ENCODE measurements at regions of chr19 and their contacts with region 1.

Region 1: GRCh38 chr19:39704181-39705044 is at the start of gene LGALS14:
- DNase-seq: no peak
- ATAC-seq: peak; percentile 68
- H3K4me3 ChIP-seq: peak within 1 kb of the TSS; percentile 58
- H3K27ac ChIP-seq: peak within 1 kb of the TSS; percentile 88
- H3K4me1 ChIP-seq: peaks cover 91% of the 10 kb centered on the region
- H3K27me3 ChIP-seq: no peaks in the 10 kb centered on the region
- CTCF ChIP-seq: no peak
- EP300 ChIP-seq: 0 out of 4 replicates have a peak, but pooled peaks of 1 of the 2 experiments have one; percentile 33
- POLR2A ChIP-seq: peak; percentile 62
- RAD21 ChIP-seq: no peak
- polyA plus RNA-seq, gene LGALS14: 21.0 to 34.6 TPM

Region 2: GRCh38 chr19:39692166-39692565 is 12.2 kb before region 1 on chr19:
- CTCF ChIA-PET with region 1: interaction called, 3 read pairs
- POLR2A ChIA-PET with region 1: no interaction called
- RAD21 ChIA-PET with region 1: interaction called, 4 read pairs
- SMC1A ChIA-PET with region 1: interaction called, 11 read pairs
- in situ Hi-C with region 1: no loop called
- intact Hi-C with region 1: no loop called
- DNase-seq: no peak
- ATAC-seq: peak; percentile 45
- H3K4me3 ChIP-seq: no peak overlapping the region
- H3K27ac ChIP-seq: peak overlapping the region; percentile 47
- H3K4me1 ChIP-seq: peaks cover 19% of the 10 kb centered on the region
- H3K27me3 ChIP-seq: no peaks in the 10 kb centered on the region
- CTCF ChIP-seq: no peak
- EP300 ChIP-seq: no peak
- POLR2A ChIP-seq: no peak
- RAD21 ChIP-seq: no peak

Region 3: DNA sequence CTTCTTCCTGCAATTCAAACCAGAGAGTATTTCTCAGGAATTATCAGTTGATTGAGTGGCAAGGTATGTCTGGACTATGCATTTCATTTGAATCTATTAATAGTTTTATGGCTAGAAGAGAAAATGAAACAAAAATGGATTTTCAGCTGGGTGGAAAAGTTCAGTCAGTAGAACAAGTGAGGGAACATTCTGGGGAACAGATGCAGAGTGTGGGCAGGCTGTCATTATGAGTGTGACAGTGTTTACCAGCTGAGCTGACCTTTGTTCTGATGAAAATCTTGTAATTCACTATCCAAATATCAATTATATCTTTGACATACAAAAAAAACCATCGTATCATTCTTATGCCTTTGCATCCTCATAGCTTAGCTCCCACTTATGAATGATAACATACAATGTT is 36.0 kb after region 1 on chr19:
- CTCF ChIA-PET with region 1: no interaction called
- POLR2A ChIA-PET with region 1: no interaction called
- RAD21 ChIA-PET with region 1: interaction called, 5 read pairs
- SMC1A ChIA-PET with region 1: no interaction called
- in situ Hi-C with region 1: no loop called
- intact Hi-C with region 1: loop called (anchors 5 kb)
- DNase-seq: no peak
- ATAC-seq: no peak
- H3K4me3 ChIP-seq: no peak overlapping the region
- H3K27ac ChIP-seq: no peak overlapping the region
- H3K4me1 ChIP-seq: peaks cover 9% of the 10 kb centered on the region
- H3K27me3 ChIP-seq: no peaks in the 10 kb centered on the region
- CTCF ChIP-seq: no peak
- EP300 ChIP-seq: no peak
- POLR2A ChIP-seq: no peak
- RAD21 ChIP-seq: no peak